Dorsolateral prefrontal cortex (tissue), 120 donors: ENCODE measurements at regions of chr7 and their contacts with region 1.

Region 1: GRCh38 chr7:80027611-80028173 is 106.9 kb upstream of the GNAI1 start:
- DNase-seq: no peak
- H3K4me3 ChIP-seq: no peak overlapping the region
- H3K27ac ChIP-seq: no peak overlapping the region
- H3K27me3 ChIP-seq: no peaks in the 10 kb centered on the region
- CTCF ChIP-seq: no peak

Region 2: GRCh38 chr7:79308192-79308591 is 719.5 kb before region 1 on chr7:
- intact Hi-C with region 1: loop called in 1 of 2 experiments (anchors 10 kb)
- DNase-seq: peak in 1 of 10 donors; percentile 77
- H3K4me3 ChIP-seq: no peak overlapping the region
- H3K27ac ChIP-seq: peak overlapping the region in 1 of 59 donors; percentile 63
- H3K27me3 ChIP-seq: no peaks in the 10 kb centered on the region
- CTCF ChIP-seq: peak in 3 of 56 donors; percentile 14 to 24 (median 17)

Region 3: GRCh38 chr7:80186721-80187120 is 159.0 kb after region 1 on chr7:
- intact Hi-C with region 1: no loop called
- DNase-seq: peak in 1 of 10 donors; percentile 36
- H3K4me3 ChIP-seq: peak overlapping the region in 18 of 59 donors; percentile 2 to 40 (median 23)
- H3K27ac ChIP-seq: peak overlapping the region; percentile 65 to 99 (median 95)
- H3K27me3 ChIP-seq: no peaks in the 10 kb centered on the region
- CTCF ChIP-seq: no peak